ENCODE measurements at regions of chr1 and their contacts with region 1.

Region 1: DNA sequence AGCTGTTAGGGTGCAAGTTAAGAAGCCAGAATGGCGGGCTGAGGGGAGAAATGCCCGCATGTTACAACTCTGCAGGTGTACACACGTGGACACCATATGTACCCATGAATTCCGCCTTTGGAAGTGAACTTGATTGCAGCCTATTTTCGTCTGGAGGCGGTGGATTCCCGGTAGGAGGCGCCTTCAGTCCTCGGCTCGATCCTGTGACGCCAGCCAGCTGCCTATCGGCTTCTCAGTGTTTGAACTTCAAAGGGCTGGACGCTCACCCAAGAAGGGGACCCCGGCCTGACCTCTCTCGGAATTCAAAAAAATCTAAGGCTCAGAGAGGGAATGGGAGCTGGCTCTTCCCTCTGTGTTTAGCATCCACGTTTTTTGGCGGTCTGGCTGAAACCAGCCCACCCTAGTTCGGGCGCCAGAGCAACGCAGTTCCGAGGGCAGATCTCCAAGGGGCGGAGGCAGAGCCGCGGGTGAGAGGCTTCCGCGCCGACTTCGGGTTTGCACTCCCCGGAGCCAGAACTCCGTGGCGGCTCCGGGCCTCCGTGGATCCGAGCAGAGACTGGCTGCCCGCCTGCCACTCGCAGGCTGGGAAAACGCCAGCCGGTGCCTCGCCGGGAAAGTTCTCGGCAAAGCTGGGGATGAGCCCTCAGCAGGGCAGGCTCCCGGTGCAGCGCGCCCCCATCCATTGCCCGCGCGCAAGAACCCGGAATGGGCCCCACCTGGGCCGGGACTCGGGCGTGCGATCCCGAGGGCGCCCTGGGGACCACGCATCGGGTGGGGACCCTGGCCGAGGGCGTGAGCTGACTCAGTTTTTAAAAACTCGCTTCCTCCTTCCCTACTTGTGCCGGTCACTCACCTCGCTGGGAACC is 996 bp upstream of the TMEM51 start:
- DNase-seq: peak; percentile 89
- ATAC-seq: peak; percentile 52
- H3K4me3 ChIP-seq: peak overlapping the region; percentile 76
- H3K27ac ChIP-seq: peak overlapping the region; percentile 67
- H3K4me1 ChIP-seq: peaks cover 21% of the 10 kb centered on the region
- H3K27me3 ChIP-seq: no peaks in the 10 kb centered on the region
- CTCF ChIP-seq: peak; percentile 80

Region 2: GRCh38 chr1:15120251-15120945 is 32.2 kb before region 1 on chr1:
- CTCF ChIA-PET with region 1: no interaction called
- POLR2A ChIA-PET with region 1: no interaction called
- intact Hi-C with region 1: no loop called
- DNase-seq: no peak
- ATAC-seq: no peak
- H3K4me3 ChIP-seq: no peak overlapping the region
- H3K27ac ChIP-seq: no peak overlapping the region
- H3K4me1 ChIP-seq: no peaks in the 10 kb centered on the region
- H3K27me3 ChIP-seq: no peaks in the 10 kb centered on the region
- CTCF ChIP-seq: no peak

Region 3: DNA sequence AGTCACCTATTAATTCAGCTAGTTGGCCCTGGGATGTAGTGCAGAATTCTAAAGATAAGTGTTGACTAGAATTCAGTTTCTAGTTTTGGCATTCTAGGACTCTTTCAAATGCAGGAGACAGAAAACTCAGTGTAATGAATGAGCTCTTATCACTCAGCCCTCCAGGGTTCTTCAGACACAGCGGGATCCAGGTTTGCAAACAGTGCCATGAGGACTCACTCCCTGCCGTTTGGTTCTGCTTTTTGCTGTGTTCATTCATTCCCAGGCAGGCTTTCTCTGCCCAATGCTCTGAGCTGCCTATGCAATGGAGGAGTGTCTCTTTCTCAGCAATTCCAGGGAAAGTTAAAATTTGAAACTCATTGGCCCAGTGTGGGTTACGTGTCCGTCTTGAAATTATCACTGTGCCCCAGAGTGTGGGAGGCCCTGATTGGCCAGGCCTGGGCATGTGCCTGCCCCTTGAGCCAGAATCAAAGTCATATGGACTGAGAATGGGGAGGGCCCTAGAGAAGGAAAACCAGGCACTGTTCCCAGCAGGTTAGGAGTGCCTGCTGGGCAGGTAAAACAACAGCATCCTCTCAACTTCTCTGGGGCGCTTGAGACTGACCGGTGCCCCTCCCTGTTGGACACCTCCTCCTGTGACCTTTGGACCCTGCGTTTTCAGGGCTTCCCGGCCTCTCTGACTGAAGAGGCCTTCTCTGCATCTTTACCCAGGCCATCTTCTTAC is 44.4 kb after region 1 on chr1:
- CTCF ChIA-PET with region 1: interaction called, 3 read pairs
- POLR2A ChIA-PET with region 1: no interaction called
- intact Hi-C with region 1: loop called (anchors 1 kb)
- DNase-seq: no peak
- ATAC-seq: no peak
- H3K4me3 ChIP-seq: no peak overlapping the region
- H3K27ac ChIP-seq: no peak overlapping the region
- H3K4me1 ChIP-seq: peaks cover 24% of the 10 kb centered on the region
- H3K27me3 ChIP-seq: no peaks in the 10 kb centered on the region
- CTCF ChIP-seq: no peak

Region 4: GRCh38 chr1:15714406-15715136 is 562.0 kb after region 1 on chr1:
- CTCF ChIA-PET with region 1: no interaction called
- POLR2A ChIA-PET with region 1: no interaction called
- intact Hi-C with region 1: no loop called
- DNase-seq: no peak
- ATAC-seq: no peak; the same call in 1 of the 2 replicates
- H3K4me3 ChIP-seq: no peak overlapping the region
- H3K27ac ChIP-seq: no peak overlapping the region
- H3K4me1 ChIP-seq: no peaks in the 10 kb centered on the region
- H3K27me3 ChIP-seq: no peaks in the 10 kb centered on the region
- CTCF ChIP-seq: no peak